ENCODE measurements at regions of chr5 and their contacts with region 1.

Region 1: GRCh38 chr5:142758056-142758795 is 12.0 kb upstream of the ARHGAP26 start:
- H3K4me3 Mint-ChIP-seq: no peak overlapping the region
- H3K27ac Mint-ChIP-seq: peak overlapping the region; percentile 67
- H3K4me1 Mint-ChIP-seq: peaks cover 53% of the 10 kb centered on the region
- H3K27me3 Mint-ChIP-seq: peaks cover 6% of the 10 kb centered on the region

Region 2: GRCh38 chr5:142720641-142721271 is 37.5 kb before region 1 on chr5:
- intact Hi-C with region 1: loop called (anchors 5 kb)
- H3K4me3 Mint-ChIP-seq: no peak overlapping the region
- H3K27ac Mint-ChIP-seq: peak overlapping the region; percentile 16
- H3K4me1 Mint-ChIP-seq: peaks cover 32% of the 10 kb centered on the region
- H3K27me3 Mint-ChIP-seq: no peaks in the 10 kb centered on the region